B cell (primary cell): ENCODE measurements at regions of chr21 and their contacts with region 1.

Region 1: GRCh38 chr21:29293495-29293894 is 5.2 kb upstream of the BACH1 start:
- DNase-seq: peak; percentile 91
- ATAC-seq: peak; percentile 95
- H3K4me3 ChIP-seq: no peak overlapping the region
- H3K4me3 Mint-ChIP-seq: peak overlapping the region; percentile 33
- H3K27ac ChIP-seq: peak overlapping the region; percentile 72 to 77
- H3K27ac Mint-ChIP-seq: peak overlapping the region; percentile 93
- H3K4me1 ChIP-seq: peaks cover 29 to 30% of the 10 kb centered on the region in 2 donors
- H3K4me1 Mint-ChIP-seq: peaks cover 43% of the 10 kb centered on the region
- H3K27me3 ChIP-seq: no peaks in the 10 kb centered on the region
- H3K27me3 Mint-ChIP-seq: no peaks in the 10 kb centered on the region
- CTCF ChIP-seq: no peak

Region 2: GRCh38 chr21:29258626-29259335 is 34.7 kb before region 1 on chr21:
- CTCF ChIA-PET with region 1: interaction called, 3 read pairs
- POLR2A ChIA-PET with region 1: no interaction called
- intact Hi-C with region 1: loop called (anchors 5 kb)
- DNase-seq: no peak
- ATAC-seq: no peak
- H3K4me3 ChIP-seq: no peak overlapping the region
- H3K4me3 Mint-ChIP-seq: no peak overlapping the region
- H3K27ac ChIP-seq: no peak overlapping the region
- H3K27ac Mint-ChIP-seq: no peak overlapping the region
- H3K4me1 ChIP-seq: no peaks in the 10 kb centered on the region
- H3K4me1 Mint-ChIP-seq: no peaks in the 10 kb centered on the region
- H3K27me3 ChIP-seq: no peaks in the 10 kb centered on the region
- H3K27me3 Mint-ChIP-seq: no peaks in the 10 kb centered on the region
- CTCF ChIP-seq: no peak